A673 (cell line): ENCODE measurements at regions of chr19 and their contacts with region 1.

Region 1: DNA sequence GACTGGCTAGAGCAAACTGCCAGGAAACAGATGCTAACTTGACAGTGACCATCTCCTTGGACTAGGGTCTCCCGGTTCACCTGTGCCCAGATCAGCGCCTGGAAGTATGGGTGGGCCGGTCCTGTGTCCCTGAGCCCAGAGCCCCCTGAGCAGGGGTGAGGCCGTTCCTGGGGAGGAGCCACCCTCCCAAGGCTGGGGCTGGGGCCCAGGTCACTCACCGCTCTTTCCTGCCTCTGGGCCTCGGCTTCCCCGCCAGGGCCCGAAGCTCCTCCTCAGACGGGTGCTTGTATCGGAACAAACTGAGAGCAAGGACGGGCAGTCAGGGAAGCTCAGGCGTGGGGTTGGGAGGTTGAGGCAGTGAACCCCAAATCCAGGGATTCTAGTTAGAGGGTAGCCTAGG is 5.4 kb downstream of the TMEM161A start:
- DNase-seq: no peak
- H3K4me3 ChIP-seq: no peak overlapping the region
- H3K27ac ChIP-seq: no peak overlapping the region
- H3K4me1 ChIP-seq: no peaks in the 10 kb centered on the region
- H3K27me3 ChIP-seq: no peaks in the 10 kb centered on the region
- CTCF ChIP-seq: no peak

Region 2: DNA sequence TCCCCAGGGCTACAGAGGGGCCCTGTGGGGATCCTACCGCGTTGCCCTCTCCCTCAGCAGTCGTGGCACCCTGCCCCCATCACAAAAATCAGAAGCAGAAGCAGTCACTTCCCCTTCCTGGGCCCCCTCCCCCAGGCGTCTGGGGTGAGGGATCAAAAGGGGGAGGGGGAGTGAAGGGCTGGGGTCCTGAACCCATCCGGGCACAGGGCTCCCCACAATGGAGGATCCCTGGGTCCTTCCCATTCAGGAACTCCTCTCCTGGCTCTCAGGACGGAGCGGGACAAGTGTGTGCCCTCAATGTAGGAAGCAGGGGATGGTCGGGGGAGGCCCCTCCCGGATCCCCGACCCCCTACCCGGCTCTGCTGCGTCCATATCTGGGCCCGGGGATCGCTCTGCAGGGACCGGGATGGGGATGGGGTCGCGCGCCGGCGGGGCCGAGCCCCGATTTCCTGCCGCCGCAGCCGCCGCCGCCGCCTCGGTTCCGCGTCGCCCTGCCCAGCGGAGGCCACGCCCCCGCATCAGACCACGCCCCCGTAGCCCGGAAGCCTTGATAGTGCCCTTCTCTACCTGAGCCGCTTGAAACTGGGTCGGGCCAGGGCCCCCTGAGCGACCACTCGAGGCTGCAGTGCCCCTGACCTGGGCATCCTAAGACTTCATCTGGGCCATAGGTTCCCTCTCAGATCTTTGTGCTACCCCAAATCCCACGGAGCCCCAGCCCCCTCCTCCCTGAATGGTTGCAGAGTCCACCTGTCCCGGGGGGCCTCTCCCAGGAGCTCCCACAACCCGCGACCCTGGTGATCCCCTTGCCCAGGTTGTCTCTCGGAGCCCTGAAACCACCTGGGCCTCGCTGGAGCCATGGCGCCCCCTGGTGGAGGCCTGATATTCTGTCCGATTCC is 510.5 kb after region 1 on chr19 and contains the start of gene GMIP:
- CTCF ChIA-PET with region 1: interaction called, 12 read pairs
- POLR2A ChIA-PET with region 1: no interaction called
- intact Hi-C with region 1: no loop called
- DNase-seq: peak; percentile 66
- H3K4me3 ChIP-seq: peak within 1 kb of the TSS; percentile 79
- H3K27ac ChIP-seq: peak within 1 kb of the TSS; percentile 58
- H3K4me1 ChIP-seq: no peaks in the 10 kb centered on the region
- H3K27me3 ChIP-seq: no peaks in the 10 kb centered on the region
- CTCF ChIP-seq: peak; percentile 96
- total RNA-seq, gene GMIP: 9.0 and 10.9 TPM in 2 replicates